ENCODE measurements at regions of chr5 and their contacts with region 1.

Region 1: GRCh38 chr5:150694612-150695011 is 6.2 kb downstream of the RBM22 start:
- DNase-seq: no peak
- ATAC-seq: no peak
- H3K4me3 ChIP-seq: no peak overlapping the region
- H3K27ac ChIP-seq: no peak overlapping the region
- H3K4me1 ChIP-seq: peaks cover 0 to 13% (median 10%) of the 10 kb centered on the region in 9 donors
- H3K27me3 ChIP-seq: no peaks in the 10 kb centered on the region
- CTCF ChIP-seq: no peak

Region 2: GRCh38 chr5:150449517-150450339 is 244.9 kb before region 1 on chr5 and contains the start of gene RPS14:
- intact Hi-C with region 1: loop called in 1 of 10 experiments (anchors 10 kb)
- DNase-seq: peak; percentile 92 to 94
- ATAC-seq: peak; percentile 96 to 99 (median 98)
- H3K4me3 ChIP-seq: peak within 1 kb of the TSS; percentile 45 to 97 (median 84)
- H3K27ac ChIP-seq: peak within 1 kb of the TSS; percentile 89 to 99 (median 97)
- H3K4me1 ChIP-seq: peaks cover 7 to 47% (median 18%) of the 10 kb centered on the region in 9 donors
- H3K27me3 ChIP-seq: no peaks in the 10 kb centered on the region
- CTCF ChIP-seq: peak; percentile 89 to 97 (median 92)
- total RNA-seq, gene RPS14: 984 to 1,344 (median 1,239) TPM

Region 3: GRCh38 chr5:150544611-150545219 is 149.9 kb before region 1 on chr5:
- intact Hi-C with region 1: no loop called
- DNase-seq: peak; percentile 78 to 80
- ATAC-seq: peak; percentile 69 to 81 (median 77)
- H3K4me3 ChIP-seq: no peak overlapping the region
- H3K27ac ChIP-seq: peak overlapping the region in 2 of 10 donors; percentile 12 to 48
- H3K4me1 ChIP-seq: peaks cover 0 to 46% (median 32%) of the 10 kb centered on the region in 9 donors
- H3K27me3 ChIP-seq: no peaks in the 10 kb centered on the region
- CTCF ChIP-seq: peak; percentile 71 to 95 (median 89)

Region 4: GRCh38 chr5:150738862-150739261 is 44.2 kb after region 1 on chr5:
- intact Hi-C with region 1: no loop called
- DNase-seq: no peak
- ATAC-seq: no peak
- H3K4me3 ChIP-seq: no peak overlapping the region
- H3K27ac ChIP-seq: peak overlapping the region in 1 of 10 donors; percentile 52
- H3K4me1 ChIP-seq: peaks cover 0 to 57% (median 4%) of the 10 kb centered on the region in 9 donors
- H3K27me3 ChIP-seq: no peaks in the 10 kb centered on the region
- CTCF ChIP-seq: no peak